Stomach (tissue), 19 donors: ENCODE measurements at regions of chr4 and their contacts with region 1.

Region 1: DNA sequence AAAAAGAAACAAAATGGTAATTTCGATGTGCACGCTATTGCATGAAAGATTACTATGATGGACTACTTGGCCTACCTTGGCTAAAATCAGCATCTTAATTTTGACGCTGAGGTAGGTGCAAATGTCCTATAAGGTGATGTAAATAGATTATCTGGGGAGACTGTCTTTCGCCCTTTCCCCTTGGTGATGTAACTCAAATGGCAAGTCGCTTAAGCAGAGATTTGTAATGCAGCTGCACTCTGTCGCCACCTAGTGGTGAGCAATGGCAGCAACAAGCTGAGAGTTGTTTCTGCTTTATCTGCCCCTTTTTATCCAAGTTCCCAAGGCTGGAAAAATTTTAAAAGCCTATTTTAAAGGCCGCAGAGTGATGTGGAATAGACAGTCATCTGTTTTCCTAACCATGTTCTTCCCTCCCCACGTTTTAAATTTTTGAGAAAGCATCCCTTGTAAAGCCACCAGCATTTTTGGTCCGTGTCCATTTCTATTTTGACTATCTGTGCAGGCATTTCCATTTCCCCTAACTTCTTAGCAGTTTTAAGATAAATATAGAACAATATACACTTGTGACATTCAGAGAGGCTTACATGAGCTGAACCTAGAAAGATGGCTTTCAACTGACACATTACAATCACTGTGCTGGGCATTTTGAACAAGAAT is 62.4 kb upstream of the PDLIM3 start:
- DNase-seq: peak; percentile 80 to 93
- H3K4me3 ChIP-seq: no peak overlapping the region
- H3K27ac ChIP-seq: peak overlapping the region in 4 of 5 donors; percentile 10 to 84 (median 38)
- H3K4me1 ChIP-seq: peaks cover 0 to 35% (median 17%) of the 10 kb centered on the region in 4 donors
- H3K27me3 ChIP-seq: no peaks in the 10 kb centered on the region
- CTCF ChIP-seq: peak in 6 of 7 experiments; percentile 49 to 97 (median 96)
- EP300 ChIP-seq: no peak
- POLR2A ChIP-seq: no peak

Region 2: GRCh38 chr4:185471235-185472102 is 126.2 kb before region 1 on chr4 and contains the start of gene CCDC110:
- intact Hi-C with region 1: loop called (anchors 10 kb)
- DNase-seq: peak; percentile 97 to 98
- H3K4me3 ChIP-seq: peak within 1 kb of the TSS; percentile 85 to 96 (median 92)
- H3K27ac ChIP-seq: peak within 1 kb of the TSS; percentile 75 to 88 (median 78)
- H3K4me1 ChIP-seq: peaks cover 0 to 26% (median 16%) of the 10 kb centered on the region in 4 donors
- H3K27me3 ChIP-seq: no peaks in the 10 kb centered on the region
- CTCF ChIP-seq: peak in 4 of 7 experiments; percentile 61 to 87 (median 82)
- EP300 ChIP-seq: no peak
- POLR2A ChIP-seq: no peak
- total RNA-seq, gene CCDC110: 0.92 to 9.4 (median 5.4) TPM

Region 3: GRCh38 chr4:185726931-185727330 is 129.3 kb after region 1 on chr4:
- intact Hi-C with region 1: no loop called
- DNase-seq: peak in 1 of 2 donors; percentile 73
- H3K4me3 ChIP-seq: no peak overlapping the region
- H3K27ac ChIP-seq: peak overlapping the region in 3 of 5 donors; percentile 35 to 84 (median 43)
- H3K4me1 ChIP-seq: peaks cover 23 to 90% (median 57%) of the 10 kb centered on the region in 4 donors
- H3K27me3 ChIP-seq: no peaks in the 10 kb centered on the region
- CTCF ChIP-seq: no peak
- EP300 ChIP-seq: no peak
- POLR2A ChIP-seq: no peak